ENCODE measurements at regions of chr13 and their contacts with region 1.

Region 1: GRCh38 chr13:36275190-36276002 is 22.2 kb downstream of the CCDC169 start:
- DNase-seq: no peak
- H3K4me3 ChIP-seq: no peak overlapping the region
- CTCF ChIP-seq: peak; percentile 41

Region 2: DNA sequence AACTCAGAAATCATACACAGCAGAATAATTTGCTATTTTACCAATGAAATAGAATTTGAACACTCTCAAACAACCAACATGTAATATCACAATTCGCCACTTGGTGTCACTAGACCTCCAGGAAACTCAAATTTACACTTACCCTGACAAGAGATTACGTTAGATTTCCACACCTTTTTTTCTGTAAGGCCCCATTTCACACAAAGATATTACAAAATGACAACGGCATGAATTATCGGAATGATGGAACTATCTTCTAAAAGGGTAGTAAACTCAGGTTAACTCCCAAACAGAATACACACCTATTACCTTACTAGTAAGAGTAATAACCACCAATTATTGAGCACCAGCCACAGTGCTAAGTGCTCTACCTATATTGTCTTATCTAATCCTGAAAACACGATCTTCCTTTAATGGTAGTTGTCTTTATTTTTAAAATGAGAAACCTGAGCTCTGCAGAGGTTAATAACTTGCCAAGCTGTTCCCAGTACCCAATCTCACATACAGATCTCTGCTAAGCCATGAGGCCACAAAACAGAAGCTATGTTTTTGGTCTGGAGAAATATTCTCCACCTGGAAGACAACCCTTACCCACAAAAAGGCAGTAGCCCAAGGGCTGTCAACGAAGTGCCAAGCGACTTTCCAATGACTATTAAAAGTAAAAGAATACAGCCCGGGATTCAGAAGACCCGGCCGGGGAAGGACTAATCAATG is 296.6 kb before region 1 on chr13:
- CTCF ChIA-PET with region 1: interaction called, 647 read pairs
- POLR2A ChIA-PET with region 1: interaction called, 7 read pairs
- DNase-seq: no peak
- H3K4me3 ChIP-seq: no peak overlapping the region
- CTCF ChIP-seq: peak; percentile 46

Region 3: GRCh38 chr13:35988648-35989081 is 286.7 kb before region 1 on chr13:
- CTCF ChIA-PET with region 1: interaction called, 22 read pairs
- POLR2A ChIA-PET with region 1: no interaction called
- DNase-seq: no peak
- H3K4me3 ChIP-seq: no peak overlapping the region
- CTCF ChIP-seq: no peak

Region 4: DNA sequence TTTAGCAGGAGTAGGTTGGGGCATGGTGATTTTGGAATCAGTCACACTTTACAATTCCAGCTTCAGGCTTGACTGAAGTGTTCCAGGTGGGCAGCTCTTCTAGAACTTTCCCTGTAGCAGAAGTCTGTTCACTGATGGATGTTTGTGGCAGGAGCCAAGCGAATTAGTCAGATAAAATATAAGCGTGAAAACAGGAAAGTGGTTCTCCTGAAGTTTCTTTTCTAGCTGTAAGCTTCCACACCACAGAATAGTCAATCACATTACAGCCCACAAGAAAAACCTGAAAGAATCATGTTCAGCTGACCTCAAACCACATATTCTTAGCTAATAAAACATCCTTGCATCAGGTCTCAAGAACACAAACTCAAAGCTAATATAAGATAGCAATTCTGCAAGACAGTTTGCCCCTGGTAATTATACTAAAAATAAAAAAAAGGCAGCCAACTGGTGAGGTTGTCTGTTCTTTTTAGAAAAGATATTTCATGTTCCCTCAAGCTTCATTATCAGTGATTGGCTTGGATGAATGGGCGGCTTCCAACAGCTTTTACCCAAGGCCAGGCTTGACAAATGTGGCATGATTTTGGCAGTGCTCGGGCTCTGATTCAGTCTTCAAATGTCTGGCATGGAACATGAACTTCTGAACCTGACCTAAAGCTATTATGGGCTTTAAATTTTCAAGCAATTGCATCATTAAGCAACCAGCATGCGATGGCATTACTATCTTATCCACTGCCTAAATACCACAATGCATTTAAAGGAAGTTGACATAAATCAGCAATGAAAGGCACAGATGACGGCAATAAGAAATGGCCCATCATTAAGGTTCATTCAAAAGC is 281.0 kb before region 1 on chr13:
- CTCF ChIA-PET with region 1: interaction called, 22 read pairs
- POLR2A ChIA-PET with region 1: no interaction called
- DNase-seq: peak; percentile 84
- H3K4me3 ChIP-seq: no peak overlapping the region
- CTCF ChIP-seq: no peak

Region 5: DNA sequence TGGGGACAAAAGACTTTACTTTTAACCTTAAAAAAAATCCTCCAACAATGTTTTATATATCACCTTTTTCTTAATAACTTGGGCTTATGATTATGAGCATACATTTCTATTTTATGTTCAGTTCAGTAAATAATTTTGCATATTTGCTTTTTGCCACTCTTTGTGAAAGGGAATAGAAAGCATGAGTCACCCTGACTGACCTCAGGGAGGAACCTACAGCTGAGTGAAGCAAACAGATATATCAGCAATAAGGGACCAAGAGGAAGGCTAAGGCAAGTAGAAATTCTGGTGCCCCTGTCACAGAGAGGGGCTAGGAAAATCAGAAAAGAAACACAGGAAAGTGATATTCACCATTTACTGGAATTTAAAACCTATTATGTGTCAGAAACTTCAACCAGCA is 23.9 kb before region 1 on chr13:
- CTCF ChIA-PET with region 1: interaction called, 13 read pairs
- POLR2A ChIA-PET with region 1: no interaction called
- DNase-seq: no peak
- H3K4me3 ChIP-seq: no peak overlapping the region
- CTCF ChIP-seq: no peak

Region 6: GRCh38 chr13:36261976-36262375 is 13.4 kb before region 1 on chr13:
- CTCF ChIA-PET with region 1: interaction called, 24 read pairs
- POLR2A ChIA-PET with region 1: no interaction called
- DNase-seq: no peak
- H3K4me3 ChIP-seq: no peak overlapping the region
- CTCF ChIP-seq: no peak